Activated CD4-positive, alpha-beta T cell treated with anti-CD3 and anti-CD28 coated beads, Interleukin-2, amount 10 ng/mL, durations not matched to agents 24 days and 14 days (primary cell): ENCODE measurements at regions of chr12 and their contacts with region 1.

Region 1: DNA sequence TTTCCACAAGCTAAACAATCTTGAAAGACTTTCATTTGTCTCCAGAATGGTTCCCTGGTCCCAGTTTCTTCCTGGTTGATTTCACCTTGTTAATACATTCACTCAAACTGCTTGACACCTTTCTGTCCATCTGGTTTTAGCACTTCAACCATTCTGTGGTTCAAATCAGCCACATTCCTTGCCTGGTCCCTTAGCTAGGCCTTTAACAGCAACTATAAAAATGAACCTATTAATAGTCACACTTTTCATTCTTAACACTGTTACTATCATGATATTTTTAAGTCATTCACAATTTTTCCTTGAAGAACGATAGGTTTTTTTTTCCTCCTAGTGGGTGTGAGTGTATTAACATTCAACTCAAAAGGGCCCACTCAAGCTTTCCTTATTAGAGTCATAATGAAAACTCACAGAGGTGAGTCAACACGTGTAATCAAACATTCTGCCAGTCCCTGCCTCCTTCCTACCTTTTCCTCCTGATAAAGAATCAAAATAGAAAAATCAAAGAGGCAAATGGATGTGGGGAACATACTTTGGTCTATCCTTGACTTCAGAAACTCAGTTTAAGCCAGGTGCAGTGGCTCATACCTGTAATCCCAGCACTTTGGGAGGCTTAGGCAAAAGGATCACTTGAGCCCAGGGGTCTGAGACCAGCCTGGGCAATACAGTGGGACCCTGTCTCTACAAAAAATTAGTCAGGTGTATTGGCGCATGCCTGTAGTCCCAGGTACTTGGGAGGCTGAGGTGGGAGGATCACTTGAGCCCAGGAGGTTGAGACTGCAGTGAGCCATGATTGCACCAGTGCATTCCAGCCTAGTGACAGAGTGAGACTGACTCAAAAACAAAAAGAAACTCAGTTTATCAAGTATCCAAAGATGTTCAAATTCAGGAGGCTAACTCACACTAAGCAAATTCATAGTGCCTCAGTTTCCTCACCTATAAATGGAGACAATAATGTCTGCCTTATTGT is 34.5 kb upstream of the CCNT1 start:
- DNase-seq: no peak
- H3K4me3 Mint-ChIP-seq: no peak overlapping the region
- H3K27ac Mint-ChIP-seq: peak overlapping the region; percentile 62
- H3K4me1 Mint-ChIP-seq: peaks cover 14% of the 10 kb centered on the region
- H3K27me3 Mint-ChIP-seq: peaks cover 14% of the 10 kb centered on the region

Region 2: DNA sequence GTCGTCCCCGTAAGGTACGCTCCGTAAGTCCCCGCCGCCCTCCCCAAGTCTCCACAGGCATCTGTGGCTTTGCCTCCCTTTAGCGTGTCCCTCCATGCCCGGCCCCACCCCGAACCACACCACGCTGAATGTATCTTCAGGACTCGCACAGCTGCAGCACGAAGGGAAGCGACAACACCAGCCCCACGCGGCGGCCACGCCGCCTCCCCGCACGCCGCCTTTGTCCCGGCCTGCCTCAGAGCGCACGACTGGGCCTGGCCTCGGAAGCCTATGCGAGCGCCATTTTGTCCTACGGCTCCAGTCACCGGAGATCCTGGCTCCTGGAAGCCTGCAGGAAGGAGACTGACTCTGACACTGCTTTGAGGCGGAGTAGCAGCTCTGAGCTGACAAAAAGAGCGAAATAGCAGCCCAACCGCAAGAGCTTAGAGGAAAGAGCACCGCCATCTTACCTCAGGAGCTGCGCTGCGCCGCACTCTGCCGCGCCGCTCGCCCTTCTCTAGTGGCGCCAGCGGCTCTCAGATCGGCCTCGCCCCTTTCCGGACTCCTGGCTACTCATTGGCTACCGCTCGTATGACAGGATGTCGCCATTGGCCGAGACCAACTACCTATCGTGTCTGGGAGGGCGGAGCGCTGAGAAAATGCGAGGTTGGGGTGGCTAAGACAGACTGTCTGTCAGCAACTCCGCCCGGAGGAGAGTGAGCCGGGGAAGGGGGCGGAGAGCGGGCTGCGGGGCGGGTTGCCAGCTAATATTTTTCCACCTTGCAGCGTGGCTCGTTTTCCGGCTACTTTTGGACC is 69.1 kb before region 1 on chr12 and contains the start of gene KANSL2:
- intact Hi-C with region 1: loop called (anchors 2 kb)
- DNase-seq: peak; percentile 99
- H3K4me3 Mint-ChIP-seq: peak within 1 kb of the TSS; percentile 98
- H3K27ac Mint-ChIP-seq: peak within 1 kb of the TSS; percentile 94
- H3K4me1 Mint-ChIP-seq: peaks cover 33% of the 10 kb centered on the region
- H3K27me3 Mint-ChIP-seq: no peaks in the 10 kb centered on the region
- total RNA-seq, gene KANSL2: 61.3 and 66.5 TPM in 2 replicates